Natural killer cell (primary cell): ENCODE measurements at regions of chr2 and their contacts with region 1.

Region 1: GRCh38 chr2:218257390-218257981 is 3.3 kb upstream of the GPBAR1 start:
- DNase-seq: peak; percentile 69 to 85
- ATAC-seq: peak; percentile 82 to 92 (median 92)
- H3K4me3 ChIP-seq: no peak overlapping the region
- H3K4me3 Mint-ChIP-seq: peak overlapping the region; percentile 62
- H3K27ac ChIP-seq: peak overlapping the region; percentile 53
- H3K27ac Mint-ChIP-seq: peak overlapping the region; percentile 90 to 92
- H3K4me1 ChIP-seq: peaks cover 54% of the 10 kb centered on the region
- H3K4me1 Mint-ChIP-seq: peaks cover 24 to 41% of the 10 kb centered on the region in 2 donors
- H3K27me3 ChIP-seq: no peaks in the 10 kb centered on the region
- H3K27me3 Mint-ChIP-seq: no peaks in the 10 kb centered on the region
- CTCF ChIP-seq: peak; percentile 73

Region 2: GRCh38 chr2:218168635-218169462 is 88.6 kb before region 1 on chr2:
- intact Hi-C with region 1: loop called (anchors 1 kb)
- DNase-seq: peak; percentile 62 to 85
- ATAC-seq: peak; percentile 71 to 76 (median 76)
- H3K4me3 ChIP-seq: no peak overlapping the region
- H3K4me3 Mint-ChIP-seq: peak overlapping the region; percentile 35
- H3K27ac ChIP-seq: no peak overlapping the region
- H3K27ac Mint-ChIP-seq: peak overlapping the region; percentile 89 to 92
- H3K4me1 ChIP-seq: peaks cover 47% of the 10 kb centered on the region
- H3K4me1 Mint-ChIP-seq: peaks cover 55 to 59% of the 10 kb centered on the region in 2 donors
- H3K27me3 ChIP-seq: no peaks in the 10 kb centered on the region
- H3K27me3 Mint-ChIP-seq: peaks cover 0 to 2% of the 10 kb centered on the region in 2 donors
- CTCF ChIP-seq: peak; percentile 71

Region 3: DNA sequence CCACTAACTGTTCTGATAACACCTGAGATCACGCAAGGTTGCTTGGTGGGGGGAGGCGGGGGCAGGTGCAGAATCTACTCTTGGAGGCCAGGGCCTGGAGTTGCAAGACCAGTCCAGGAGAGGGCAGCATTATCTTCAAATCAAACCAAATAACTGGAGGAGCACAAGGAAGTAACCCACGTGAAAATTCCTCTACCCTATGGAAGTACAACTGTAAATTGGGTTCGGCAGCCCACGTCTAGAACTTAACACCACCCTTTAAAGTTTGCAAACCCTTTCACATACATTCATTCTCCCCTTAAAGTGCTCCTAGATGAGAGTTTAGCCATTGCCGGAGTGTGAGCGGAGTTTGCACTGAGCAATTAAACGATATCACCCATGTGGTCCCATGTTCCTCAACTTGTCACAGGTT is 71.1 kb before region 1 on chr2:
- intact Hi-C with region 1: loop called (anchors 1 kb)
- DNase-seq: peak; percentile 51 to 87
- ATAC-seq: peak; percentile 89 to 98 (median 95)
- H3K4me3 ChIP-seq: no peak overlapping the region
- H3K4me3 Mint-ChIP-seq: no peak overlapping the region
- H3K27ac ChIP-seq: no peak overlapping the region
- H3K27ac Mint-ChIP-seq: no peak overlapping the region
- H3K4me1 ChIP-seq: peaks cover 12% of the 10 kb centered on the region
- H3K4me1 Mint-ChIP-seq: peaks cover 16 to 31% of the 10 kb centered on the region in 2 donors
- H3K27me3 ChIP-seq: no peaks in the 10 kb centered on the region
- H3K27me3 Mint-ChIP-seq: no peaks in the 10 kb centered on the region
- CTCF ChIP-seq: peak; percentile 84

Region 4: DNA sequence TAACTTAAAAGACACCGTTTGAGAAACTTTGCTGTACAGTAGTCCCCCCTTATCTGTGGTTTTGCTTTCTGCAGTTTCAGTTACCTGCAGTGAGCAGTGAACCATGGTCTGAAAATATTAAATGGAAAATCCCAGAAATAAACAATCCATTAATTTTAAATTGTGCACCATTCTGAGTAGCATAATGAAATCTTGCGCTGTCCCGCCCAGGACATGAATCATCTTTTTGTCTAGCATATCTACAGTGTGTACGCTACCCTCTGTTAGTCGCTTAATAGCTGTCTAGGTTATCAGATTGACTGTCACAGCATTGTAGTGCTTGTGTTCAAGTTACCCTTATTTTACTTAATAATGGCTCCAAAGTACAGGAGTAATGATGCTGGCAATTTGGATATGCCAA is 34.4 kb before region 1 on chr2:
- intact Hi-C with region 1: loop called (anchors 5 kb)
- DNase-seq: peak in 1 of 2 donors; percentile 51
- ATAC-seq: peak; percentile 79 to 86 (median 82)
- H3K4me3 ChIP-seq: no peak overlapping the region
- H3K4me3 Mint-ChIP-seq: peak overlapping the region; percentile 76
- H3K27ac ChIP-seq: peak overlapping the region; percentile 59
- H3K27ac Mint-ChIP-seq: peak overlapping the region; percentile 98 to 99
- H3K4me1 ChIP-seq: peaks cover 55% of the 10 kb centered on the region
- H3K4me1 Mint-ChIP-seq: peaks cover 90 to 91% of the 10 kb centered on the region in 2 donors
- H3K27me3 ChIP-seq: no peaks in the 10 kb centered on the region
- H3K27me3 Mint-ChIP-seq: no peaks in the 10 kb centered on the region
- CTCF ChIP-seq: no peak